ENCODE measurements at regions of chr10 and their contacts with region 1.

Region 1: DNA sequence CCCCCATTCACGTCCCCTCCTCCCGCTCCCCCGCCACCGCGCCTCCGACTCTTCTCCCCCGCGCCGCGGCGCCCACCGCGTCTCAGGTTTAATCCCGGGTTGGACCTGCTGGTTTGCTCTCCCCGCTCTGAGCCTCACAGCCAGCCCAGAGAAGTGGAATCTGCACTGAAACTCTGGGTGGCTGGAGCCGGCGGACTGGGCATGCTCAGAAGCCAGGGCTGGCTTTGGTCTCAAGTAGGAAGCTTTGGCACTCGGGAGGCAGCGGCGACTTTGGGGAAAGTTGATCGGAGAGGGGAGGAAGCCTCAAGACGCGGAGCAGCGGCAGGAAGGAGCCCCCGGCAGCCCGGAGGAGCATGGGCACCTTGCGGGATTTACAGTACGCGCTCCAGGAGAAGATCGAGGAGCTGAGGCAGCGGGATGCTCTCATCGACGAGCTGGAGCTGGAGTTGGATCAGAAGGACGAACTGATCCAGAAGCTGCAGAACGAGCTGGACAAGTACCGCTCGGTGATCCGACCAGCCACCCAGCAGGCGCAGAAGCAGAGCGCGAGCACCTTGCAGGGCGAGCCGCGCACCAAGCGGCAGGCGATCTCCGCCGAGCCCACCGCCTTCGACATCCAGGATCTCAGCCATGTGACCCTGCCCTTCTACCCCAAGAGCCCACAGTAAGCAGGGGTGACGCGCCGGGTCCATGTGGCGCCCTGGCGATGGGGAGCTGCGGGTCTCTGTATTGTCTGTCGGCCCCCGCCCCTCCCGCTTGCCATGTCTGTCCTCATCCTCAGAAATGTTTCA is at the start of gene PRKG1:
- DNase-seq: peak; percentile 92
- H3K4me3 ChIP-seq: peak within 1 kb of the TSS; percentile 62 to 79 (median 68)
- H3K27ac ChIP-seq: peak within 1 kb of the TSS; percentile 88 to 93 (median 92)
- H3K4me1 ChIP-seq: peaks cover 0 to 31% (median 20%) of the 10 kb centered on the region in 4 donors
- H3K27me3 ChIP-seq: no peaks in the 10 kb centered on the region
- CTCF ChIP-seq: no peak
- EP300 ChIP-seq: no peak
- POLR2A ChIP-seq: peak; percentile 17 to 21
- total RNA-seq, gene PRKG1: 60.2 to 92.9 (median 79.1) TPM

Region 2: DNA sequence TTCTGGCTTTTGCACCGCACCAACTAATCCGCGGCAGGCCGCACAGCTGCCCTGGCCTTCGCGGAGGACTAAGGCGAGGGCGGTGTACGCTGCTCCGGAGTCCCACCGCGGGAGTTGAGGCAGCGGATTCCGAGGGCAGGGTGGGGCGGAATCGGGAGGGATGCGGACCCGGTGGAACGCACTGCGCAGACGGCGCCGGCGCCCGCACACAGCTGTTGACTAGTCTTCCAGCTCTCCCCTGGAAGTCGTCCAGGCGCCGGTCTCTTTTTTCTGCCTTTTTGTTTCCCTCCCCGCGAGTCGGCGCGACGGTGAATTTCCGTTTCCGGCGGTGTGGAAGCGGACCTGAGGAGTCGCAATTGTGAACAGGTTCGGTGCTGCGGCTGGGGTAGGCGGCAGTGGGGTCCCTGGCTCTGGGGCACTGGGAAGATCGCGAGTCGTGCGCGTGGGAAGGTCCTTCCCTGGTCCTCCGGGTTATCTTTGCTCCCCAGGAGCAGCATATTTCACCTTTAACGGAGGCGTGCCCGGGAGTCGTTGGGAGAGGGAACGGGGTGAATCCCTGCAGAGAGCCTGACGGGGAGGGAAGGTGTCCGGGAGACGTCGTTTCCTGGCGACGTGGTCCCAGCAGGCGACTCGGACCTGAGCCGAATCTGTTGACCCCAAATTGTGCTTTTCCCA is 334.7 kb before region 1 on chr10 and contains the start of gene ASAH2B:
- intact Hi-C with region 1: no loop called
- DNase-seq: peak; percentile 89
- H3K4me3 ChIP-seq: peak within 1 kb of the TSS; percentile 65 to 76 (median 72)
- H3K27ac ChIP-seq: peak within 1 kb of the TSS; percentile 76 to 83 (median 78)
- H3K4me1 ChIP-seq: peaks cover 0 to 5% (median 4%) of the 10 kb centered on the region in 4 donors
- H3K27me3 ChIP-seq: no peaks in the 10 kb centered on the region
- CTCF ChIP-seq: no peak
- EP300 ChIP-seq: no peak
- POLR2A ChIP-seq: no peak
- total RNA-seq, gene ASAH2B: 1.6 to 2.6 (median 2.0) TPM

Region 3: DNA sequence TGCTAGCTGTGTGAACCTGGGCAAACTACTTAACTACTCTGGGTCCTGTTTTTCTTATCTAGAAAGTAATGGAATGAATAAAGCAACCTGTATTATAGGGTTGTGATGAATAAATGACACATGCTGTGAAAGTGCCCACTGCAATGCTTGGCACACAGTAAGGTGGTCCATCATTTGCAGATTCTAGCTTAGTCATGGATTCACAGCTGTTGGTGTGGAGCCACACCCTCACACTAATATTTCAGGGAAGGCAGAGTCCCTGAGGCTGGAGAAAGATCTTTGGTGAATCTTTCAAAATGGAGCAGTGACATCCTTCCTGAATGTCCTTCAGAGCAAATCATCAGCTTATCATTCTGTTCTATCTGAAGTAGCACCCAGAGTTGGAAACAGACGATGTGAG is 249.7 kb before region 1 on chr10:
- intact Hi-C with region 1: no loop called
- DNase-seq: no peak
- H3K4me3 ChIP-seq: no peak overlapping the region
- H3K27ac ChIP-seq: no peak overlapping the region
- H3K4me1 ChIP-seq: no peaks in the 10 kb centered on the region
- H3K27me3 ChIP-seq: no peaks in the 10 kb centered on the region
- CTCF ChIP-seq: no peak
- EP300 ChIP-seq: no peak
- POLR2A ChIP-seq: no peak

Region 4: DNA sequence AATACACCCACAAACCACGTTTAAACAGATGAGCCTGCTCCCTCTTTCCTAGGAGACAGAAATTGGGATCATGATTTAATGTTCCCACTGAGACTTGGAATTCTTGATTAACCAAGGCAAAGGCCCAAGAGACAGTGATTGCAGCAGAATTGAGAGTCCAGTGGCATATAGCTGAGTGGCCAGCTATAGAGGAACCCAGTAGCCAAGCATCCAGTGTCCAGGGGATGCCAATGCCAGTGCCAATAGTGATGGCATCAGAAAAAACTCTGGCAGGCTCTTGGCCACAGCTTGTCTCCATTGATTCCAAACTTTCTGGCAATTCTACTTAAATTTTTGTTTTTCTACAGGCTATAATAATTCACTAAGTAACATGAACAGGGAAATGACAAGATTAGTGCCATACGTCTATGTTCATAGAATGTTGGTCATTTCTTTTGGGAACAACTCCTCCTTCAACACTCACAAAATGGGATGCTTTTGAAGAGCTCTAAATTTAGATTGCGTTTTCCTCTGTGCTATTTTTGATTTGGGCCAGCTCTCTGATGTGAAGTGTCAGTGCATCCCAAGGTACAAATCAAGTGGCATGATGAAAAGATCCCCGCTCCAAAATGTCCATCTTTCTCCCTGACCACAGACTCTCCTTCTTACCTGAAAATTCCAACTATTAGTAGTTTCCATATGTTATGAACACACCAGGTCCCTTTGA is 105.9 kb before region 1 on chr10:
- intact Hi-C with region 1: no loop called
- DNase-seq: no peak
- H3K4me3 ChIP-seq: no peak overlapping the region
- H3K27ac ChIP-seq: no peak overlapping the region
- H3K4me1 ChIP-seq: no peaks in the 10 kb centered on the region
- H3K27me3 ChIP-seq: no peaks in the 10 kb centered on the region
- CTCF ChIP-seq: no peak
- EP300 ChIP-seq: no peak
- POLR2A ChIP-seq: no peak

Region 5: DNA sequence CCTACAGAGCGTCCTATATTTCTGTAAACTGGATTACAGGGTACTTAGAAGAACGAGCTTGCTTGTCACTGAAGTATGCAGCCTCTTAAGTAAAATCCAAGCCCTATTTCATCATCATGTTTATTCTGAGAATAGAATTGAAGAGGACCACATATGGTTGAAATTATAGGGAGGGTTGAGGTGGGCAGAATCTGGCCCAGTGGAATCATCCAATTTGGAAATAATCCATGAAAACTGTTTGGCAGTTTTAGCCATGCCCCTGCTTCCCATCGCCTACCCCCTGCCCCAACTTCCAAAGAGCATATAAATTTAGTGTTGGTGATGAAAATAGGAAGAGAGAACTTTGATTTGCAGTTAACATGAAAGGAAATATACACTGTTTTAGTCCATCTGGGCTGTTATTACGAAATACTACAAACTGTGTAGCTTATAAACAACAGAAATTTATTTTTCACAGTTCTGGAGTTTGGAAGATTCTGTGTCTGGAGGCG is 150.3 kb after region 1 on chr10:
- intact Hi-C with region 1: loop called (anchors 5 kb)
- DNase-seq: no peak
- H3K4me3 ChIP-seq: peak overlapping the region in 3 of 4 donors; percentile 19 to 27 (median 26)
- H3K27ac ChIP-seq: peak overlapping the region in 3 of 4 donors; percentile 67 to 70 (median 68)
- H3K4me1 ChIP-seq: peaks cover 0 to 46% (median 33%) of the 10 kb centered on the region in 4 donors
- H3K27me3 ChIP-seq: no peaks in the 10 kb centered on the region
- CTCF ChIP-seq: no peak
- EP300 ChIP-seq: no peak
- POLR2A ChIP-seq: no peak

Region 6: GRCh38 chr10:51235865-51236264 is 161.4 kb after region 1 on chr10:
- intact Hi-C with region 1: no loop called
- DNase-seq: no peak
- H3K4me3 ChIP-seq: no peak overlapping the region
- H3K27ac ChIP-seq: no peak overlapping the region
- H3K4me1 ChIP-seq: peaks cover 0 to 21% (median 18%) of the 10 kb centered on the region in 4 donors
- H3K27me3 ChIP-seq: no peaks in the 10 kb centered on the region
- CTCF ChIP-seq: no peak
- EP300 ChIP-seq: no peak
- POLR2A ChIP-seq: no peak

Region 7: GRCh38 chr10:51301644-51302043 is 227.2 kb after region 1 on chr10:
- intact Hi-C with region 1: loop called (anchors 5 kb)
- DNase-seq: no peak
- H3K4me3 ChIP-seq: no peak overlapping the region
- H3K27ac ChIP-seq: peak overlapping the region; percentile 49 to 75 (median 66)
- H3K4me1 ChIP-seq: peaks cover 0 to 44% (median 36%) of the 10 kb centered on the region in 4 donors
- H3K27me3 ChIP-seq: no peaks in the 10 kb centered on the region
- CTCF ChIP-seq: no peak
- EP300 ChIP-seq: no peak
- POLR2A ChIP-seq: no peak

Region 8: DNA sequence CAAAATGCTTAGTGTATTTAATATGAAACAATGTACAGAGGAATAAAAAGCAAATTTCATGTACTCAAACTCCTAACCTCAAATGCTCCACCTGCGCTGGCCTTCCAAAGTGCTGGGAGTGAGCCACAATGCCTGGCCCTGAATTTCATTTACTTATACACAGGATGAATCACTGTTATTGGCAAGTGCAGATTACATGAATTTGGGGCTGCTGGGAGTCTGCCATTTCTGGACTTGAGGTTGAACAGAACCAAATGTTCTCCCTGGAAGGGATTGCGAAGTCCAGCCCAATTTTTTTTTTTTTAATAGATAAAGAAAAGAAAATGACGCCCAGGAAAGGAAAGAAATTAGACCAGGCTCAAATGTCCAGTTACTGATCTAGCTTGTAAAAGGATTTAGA is 631.8 kb after region 1 on chr10:
- intact Hi-C with region 1: loop called (anchors 5 kb)
- DNase-seq: peak; percentile 97
- H3K4me3 ChIP-seq: no peak overlapping the region
- H3K27ac ChIP-seq: peak overlapping the region; percentile 79 to 82 (median 81)
- H3K4me1 ChIP-seq: peaks cover 0 to 57% (median 49%) of the 10 kb centered on the region in 4 donors
- H3K27me3 ChIP-seq: no peaks in the 10 kb centered on the region
- CTCF ChIP-seq: no peak
- EP300 ChIP-seq: peak in 3 of 4 donors; percentile 61 to 83 (median 81)
- POLR2A ChIP-seq: no peak